Right ventricle myocardium inferior (tissue), 1 donor: ENCODE measurements at regions of chr6 and their contacts with region 1.

Region 1: GRCh38 chr6:15595461-15596173 is 67.2 kb downstream of the DTNBP1 start:
- DNase-seq: peak; percentile 26
- ATAC-seq: peak; percentile 77

Region 2: GRCh38 chr6:15184441-15184861 is 411.2 kb before region 1 on chr6:
- intact Hi-C with region 1: no loop called
- DNase-seq: no peak
- ATAC-seq: no peak

Region 3: DNA sequence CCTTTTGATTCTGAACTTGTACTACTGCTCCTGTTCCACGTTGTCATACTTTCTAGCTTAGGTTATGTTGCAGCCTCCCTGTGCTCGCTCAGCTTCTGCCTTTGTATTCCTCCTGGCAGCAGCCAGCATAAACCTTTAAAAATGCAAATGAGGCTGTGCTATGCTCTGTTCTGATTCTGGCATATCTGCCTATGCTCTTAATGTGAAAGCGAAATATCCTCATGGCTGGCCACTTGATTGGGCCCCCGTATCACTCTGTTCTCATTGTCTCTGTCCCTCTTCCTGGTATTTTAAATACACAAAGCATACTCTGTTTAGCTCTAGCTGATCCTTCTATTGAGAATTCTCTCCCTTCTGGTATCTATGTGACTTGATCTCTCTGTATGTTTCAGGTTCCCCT is 210.7 kb before region 1 on chr6:
- intact Hi-C with region 1: no loop called
- DNase-seq: no peak
- ATAC-seq: no peak

Region 4: DNA sequence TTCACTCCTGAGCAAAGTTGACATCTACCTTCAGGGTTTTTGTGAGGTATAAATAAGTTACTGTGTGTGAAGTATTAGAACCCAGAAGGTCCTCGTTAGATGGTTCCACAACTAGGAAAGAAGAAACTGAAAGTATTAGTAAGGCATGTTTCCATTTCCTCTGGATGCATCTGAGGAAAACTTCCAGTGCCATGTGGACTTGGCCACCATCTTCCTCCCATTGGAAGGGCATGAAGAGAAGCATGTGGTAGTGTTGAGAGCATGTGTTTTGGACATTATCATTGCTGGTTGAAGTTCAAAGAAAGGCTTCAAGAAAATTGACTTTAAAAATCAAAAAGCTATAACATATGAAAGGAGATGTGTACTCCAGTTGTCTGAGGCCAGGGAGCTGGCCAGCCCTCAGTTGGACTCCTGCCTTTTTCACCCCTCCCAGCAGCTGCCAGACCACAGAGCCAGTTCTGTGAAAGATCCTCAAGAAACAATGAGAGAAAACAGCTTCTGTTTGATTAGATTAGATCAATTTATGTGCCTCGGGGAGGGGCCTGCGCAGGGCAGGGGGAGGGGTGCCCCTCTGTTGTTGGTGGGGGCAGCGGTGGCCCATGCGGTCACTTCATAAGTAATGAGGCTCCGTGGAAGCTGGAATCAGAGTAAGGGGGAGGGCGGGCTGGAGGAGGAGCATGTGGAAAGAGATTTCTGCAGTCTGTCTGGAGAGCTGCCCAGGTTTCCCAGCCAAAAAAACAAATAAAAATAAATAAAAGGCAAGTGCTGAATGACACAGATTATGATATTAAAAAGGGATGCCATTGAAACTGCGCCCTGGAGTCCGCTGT is 195.8 kb before region 1 on chr6:
- intact Hi-C with region 1: no loop called
- DNase-seq: peak; percentile 79
- ATAC-seq: peak; percentile 89

Region 5: GRCh38 chr6:15512126-15512525 is 83.5 kb before region 1 on chr6:
- intact Hi-C with region 1: loop called (anchors 1 kb)
- DNase-seq: no peak
- ATAC-seq: peak; percentile 68

Region 6: GRCh38 chr6:15577550-15578171 is 18.0 kb before region 1 on chr6:
- intact Hi-C with region 1: no loop called
- DNase-seq: no peak
- ATAC-seq: no peak